ENCODE measurements at regions of chr1 and their contacts with region 1.

Region 1: DNA sequence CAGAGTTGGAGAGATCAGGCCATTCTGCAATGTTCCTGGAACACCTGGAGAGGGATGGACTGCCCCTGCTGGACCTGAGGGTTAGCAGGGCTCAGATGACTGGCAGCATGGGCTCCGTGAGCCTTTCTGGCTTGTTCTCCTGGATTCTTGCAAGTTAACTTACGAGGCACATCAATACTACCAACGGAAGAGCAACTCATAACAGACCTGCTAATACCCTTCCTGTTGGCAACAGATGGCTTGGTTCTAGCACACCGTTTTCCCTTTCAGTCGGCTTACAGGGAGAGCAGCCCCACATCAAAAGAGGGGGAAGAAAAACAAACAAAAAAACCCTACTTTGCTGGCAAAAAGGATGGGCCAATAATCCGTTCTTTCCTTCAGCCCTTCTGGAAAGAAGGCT is 47.9 kb downstream of the SLC66A1 start:
- DNase-seq: no peak
- H3K4me3 ChIP-seq: no peak overlapping the region
- H3K27ac ChIP-seq: peak overlapping the region; percentile 40 to 70
- H3K4me1 ChIP-seq: no peaks in the 10 kb centered on the region
- H3K27me3 ChIP-seq: no peaks in the 10 kb centered on the region
- CTCF ChIP-seq: no peak
- POLR2A ChIP-seq: no peak

Region 2: GRCh38 chr1:19300211-19300610 is 59.8 kb before region 1 on chr1:
- intact Hi-C with region 1: no loop called
- DNase-seq: no peak
- H3K4me3 ChIP-seq: no peak overlapping the region
- H3K27ac ChIP-seq: no peak overlapping the region
- H3K4me1 ChIP-seq: no peaks in the 10 kb centered on the region
- H3K27me3 ChIP-seq: no peaks in the 10 kb centered on the region
- CTCF ChIP-seq: no peak
- POLR2A ChIP-seq: no peak

Region 3: DNA sequence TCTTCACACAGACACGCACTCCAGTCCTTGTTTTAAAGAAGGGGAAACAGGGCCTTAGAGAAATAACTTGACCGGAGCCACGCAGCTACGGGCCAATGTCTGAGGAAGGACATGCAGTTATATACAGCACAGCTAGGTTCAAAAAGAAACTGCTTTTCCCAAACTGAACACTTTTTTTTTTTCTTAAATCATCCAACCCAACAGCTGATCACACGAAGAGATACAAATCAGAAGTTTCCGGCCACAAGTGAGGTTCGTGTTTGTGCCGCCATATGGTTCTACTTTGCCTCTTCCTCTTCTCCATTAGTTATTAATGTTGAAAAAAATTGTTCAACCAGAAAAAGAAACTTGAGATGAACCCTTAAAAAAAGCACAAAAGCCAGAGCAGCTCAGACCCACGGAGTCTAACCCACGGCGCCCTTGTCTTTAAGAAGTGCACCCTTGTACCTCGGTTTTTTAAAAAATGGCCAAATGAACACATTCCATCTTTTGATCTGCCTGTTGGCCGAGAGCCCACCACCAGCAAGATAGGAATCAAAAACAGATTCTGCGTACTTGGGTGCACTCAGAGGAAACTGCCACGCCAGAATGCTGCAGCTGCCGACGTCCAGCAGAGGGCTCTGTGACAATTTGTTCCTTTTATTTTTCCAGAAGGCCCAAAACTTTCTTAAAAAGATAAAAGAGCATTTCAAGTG is 31.0 kb after region 1 on chr1:
- intact Hi-C with region 1: loop called (anchors 1 kb)
- DNase-seq: peak in 1 of 2 donors; percentile 57
- H3K4me3 ChIP-seq: peak overlapping the region; percentile 5 to 13 (median 8)
- H3K27ac ChIP-seq: peak overlapping the region; percentile 84 to 90
- H3K4me1 ChIP-seq: peaks cover 7 to 12% of the 10 kb centered on the region in 2 donors
- H3K27me3 ChIP-seq: no peaks in the 10 kb centered on the region
- CTCF ChIP-seq: peak; percentile 84 to 87 (median 84)
- POLR2A ChIP-seq: no peak

Region 4: DNA sequence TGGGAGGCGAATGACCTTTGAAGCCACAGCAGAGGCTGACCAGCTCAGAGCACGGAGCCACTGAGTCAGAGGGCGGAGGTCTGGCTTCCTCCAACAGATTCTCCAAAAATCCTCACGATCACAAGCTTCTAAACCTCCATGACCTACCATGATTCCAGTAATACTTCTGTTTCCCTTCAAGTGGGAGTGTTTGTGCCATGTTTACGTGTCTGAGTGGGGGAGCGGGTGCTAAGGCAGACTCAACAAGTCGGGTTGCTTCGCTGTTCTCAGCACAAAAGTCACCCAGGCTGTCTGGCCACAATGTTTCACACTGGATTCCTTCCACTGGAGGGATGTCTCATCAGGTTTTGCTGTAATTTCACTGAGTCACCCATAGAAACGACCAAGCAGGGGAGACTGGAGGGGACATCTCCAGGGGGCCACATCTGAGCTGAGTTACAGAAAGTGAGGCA is 38.3 kb after region 1 on chr1:
- intact Hi-C with region 1: loop called (anchors 1 kb)
- DNase-seq: no peak
- H3K4me3 ChIP-seq: no peak overlapping the region
- H3K27ac ChIP-seq: peak overlapping the region in 1 of 2 donors; percentile 14
- H3K4me1 ChIP-seq: peaks cover 0 to 7% of the 10 kb centered on the region in 2 donors
- H3K27me3 ChIP-seq: no peaks in the 10 kb centered on the region
- CTCF ChIP-seq: peak in 1 of 3 donors; percentile 15
- POLR2A ChIP-seq: no peak

Region 5: GRCh38 chr1:20279509-20279908 is 919.5 kb after region 1 on chr1:
- intact Hi-C with region 1: no loop called
- DNase-seq: peak in 1 of 2 donors; percentile 23
- H3K4me3 ChIP-seq: no peak overlapping the region
- H3K27ac ChIP-seq: no peak overlapping the region
- H3K4me1 ChIP-seq: no peaks in the 10 kb centered on the region
- H3K27me3 ChIP-seq: no peaks in the 10 kb centered on the region
- CTCF ChIP-seq: no peak
- POLR2A ChIP-seq: no peak

Measured in breast epithelium (tissue), 4 donors.